HEK293T (cell line): ENCODE measurements at regions of chr12 and their contacts with region 1.

Region 1: DNA sequence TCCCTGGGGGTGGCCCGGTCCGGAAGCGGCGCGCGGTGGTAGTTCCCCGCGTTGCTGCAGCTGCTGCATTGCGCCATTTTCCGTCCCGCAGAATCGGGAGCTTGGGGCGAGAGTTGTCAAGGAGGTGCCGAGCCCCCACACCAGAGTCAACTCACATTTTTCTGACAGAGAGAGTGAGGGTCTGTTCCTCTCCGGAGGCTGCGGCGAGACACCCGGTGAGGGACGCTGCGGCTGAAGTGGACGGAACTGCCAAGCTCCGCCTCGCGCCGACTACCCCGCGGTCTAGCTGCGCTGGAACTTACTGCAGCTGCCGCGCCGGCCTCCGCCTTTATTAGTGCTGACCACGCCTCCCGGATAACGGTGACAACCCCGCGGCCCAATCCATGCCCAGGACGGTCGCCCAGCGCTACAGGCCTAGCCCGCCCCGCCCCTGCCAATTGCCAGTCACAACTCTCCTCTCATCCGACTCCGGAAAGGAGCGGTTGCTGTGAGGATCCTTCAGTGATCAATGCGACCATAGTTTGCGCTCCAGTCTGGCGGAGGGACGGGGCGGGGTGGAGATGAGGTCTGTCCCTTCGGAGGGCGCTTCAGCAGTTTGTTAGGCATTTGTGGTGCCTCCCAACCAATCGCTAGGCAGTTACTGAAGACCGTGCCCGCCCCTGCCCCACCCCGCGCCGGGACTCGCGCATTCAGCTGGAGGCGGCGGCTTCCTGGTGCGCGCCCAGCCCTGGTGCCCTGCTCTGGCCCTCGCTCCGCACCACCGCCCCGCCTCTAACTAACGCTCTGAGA is at the start of gene VAMP1:
- DNase-seq: peak; percentile 96

Region 2: DNA sequence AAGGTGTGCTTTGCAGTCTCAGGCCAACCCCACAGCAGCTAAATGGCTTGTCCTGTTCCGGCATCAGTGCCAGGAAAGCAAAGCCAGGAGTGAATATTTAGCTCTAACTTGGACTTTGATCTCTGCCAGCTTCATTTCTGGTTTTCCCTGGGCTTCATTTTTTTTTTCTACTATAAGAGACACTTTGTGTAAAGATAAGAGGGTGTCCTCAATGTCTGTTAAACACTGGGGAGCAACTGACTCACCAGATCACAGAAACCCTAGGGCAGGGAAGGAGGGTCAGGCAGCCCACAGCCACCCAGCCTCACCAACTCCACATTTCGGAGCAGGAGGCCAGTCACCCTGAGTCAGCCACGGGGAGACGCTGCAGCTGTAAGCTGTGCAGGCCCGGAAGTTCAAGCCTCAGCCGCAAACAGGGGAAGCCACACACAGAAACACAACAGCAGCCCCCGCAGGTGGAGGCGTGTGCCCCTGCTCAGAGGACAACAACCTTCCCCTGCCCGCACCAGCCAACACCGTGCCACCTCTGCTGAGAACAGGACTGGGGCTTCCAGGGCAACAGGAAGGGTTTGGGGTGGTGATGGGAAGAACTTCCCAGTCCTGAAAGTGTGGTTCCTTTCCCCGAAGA is 135.0 kb before region 1 on chr12:
- CTCF ChIA-PET with region 1: interaction called, 7 read pairs
- POLR2A ChIA-PET with region 1: interaction called, 29 read pairs
- DNase-seq: peak; percentile 55

Region 3: GRCh38 chr12:6423267-6424007 is 47.1 kb before region 1 on chr12:
- CTCF ChIA-PET with region 1: interaction called, 26 read pairs
- POLR2A ChIA-PET with region 1: interaction called, 17 read pairs
- DNase-seq: peak; percentile 88

Region 4: GRCh38 chr12:6493497-6494257 is 23.1 kb after region 1 on chr12 and contains the start of gene NCAPD2:
- CTCF ChIA-PET with region 1: no interaction called
- POLR2A ChIA-PET with region 1: interaction called, 42 read pairs
- DNase-seq: peak; percentile 92

Region 5: DNA sequence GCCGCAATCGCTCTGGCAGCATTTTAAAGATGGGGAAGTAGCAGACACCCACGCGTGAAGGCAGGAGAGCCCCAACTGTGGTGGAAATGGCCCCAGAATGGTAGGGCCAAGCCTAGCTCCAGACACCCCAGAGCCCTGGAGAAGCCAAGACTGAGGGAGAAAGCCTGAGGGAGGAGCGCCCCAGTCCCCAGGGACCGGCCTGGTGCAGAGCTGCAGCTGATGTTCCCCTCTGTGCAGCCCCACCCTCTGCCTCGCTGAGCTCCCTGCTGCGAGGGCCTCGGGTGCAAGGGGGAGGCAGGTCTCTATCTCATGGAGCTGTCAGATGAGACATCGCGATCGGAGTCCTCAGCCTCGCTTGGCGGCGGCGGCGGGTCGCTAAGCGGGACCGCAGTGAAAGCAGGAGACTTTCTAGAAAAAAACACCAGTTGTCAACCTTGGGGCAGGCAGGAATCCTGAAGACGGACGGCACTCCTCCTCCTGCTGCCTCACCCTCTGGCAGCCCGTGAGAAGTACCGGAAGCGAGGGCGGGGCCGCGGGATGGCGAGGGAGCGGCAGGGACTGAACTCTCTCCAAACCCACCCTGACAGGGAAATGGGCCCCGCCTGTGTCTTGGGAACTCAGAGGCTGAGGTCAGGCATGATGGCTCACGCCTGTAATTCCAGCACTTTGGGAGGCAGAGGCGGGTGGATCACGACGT is 69.8 kb after region 1 on chr12:
- CTCF ChIA-PET with region 1: interaction called, 8 read pairs
- POLR2A ChIA-PET with region 1: interaction called, 63 read pairs
- DNase-seq: no peak